ENCODE measurements at regions of chr9 and their contacts with region 1.

Region 1: DNA sequence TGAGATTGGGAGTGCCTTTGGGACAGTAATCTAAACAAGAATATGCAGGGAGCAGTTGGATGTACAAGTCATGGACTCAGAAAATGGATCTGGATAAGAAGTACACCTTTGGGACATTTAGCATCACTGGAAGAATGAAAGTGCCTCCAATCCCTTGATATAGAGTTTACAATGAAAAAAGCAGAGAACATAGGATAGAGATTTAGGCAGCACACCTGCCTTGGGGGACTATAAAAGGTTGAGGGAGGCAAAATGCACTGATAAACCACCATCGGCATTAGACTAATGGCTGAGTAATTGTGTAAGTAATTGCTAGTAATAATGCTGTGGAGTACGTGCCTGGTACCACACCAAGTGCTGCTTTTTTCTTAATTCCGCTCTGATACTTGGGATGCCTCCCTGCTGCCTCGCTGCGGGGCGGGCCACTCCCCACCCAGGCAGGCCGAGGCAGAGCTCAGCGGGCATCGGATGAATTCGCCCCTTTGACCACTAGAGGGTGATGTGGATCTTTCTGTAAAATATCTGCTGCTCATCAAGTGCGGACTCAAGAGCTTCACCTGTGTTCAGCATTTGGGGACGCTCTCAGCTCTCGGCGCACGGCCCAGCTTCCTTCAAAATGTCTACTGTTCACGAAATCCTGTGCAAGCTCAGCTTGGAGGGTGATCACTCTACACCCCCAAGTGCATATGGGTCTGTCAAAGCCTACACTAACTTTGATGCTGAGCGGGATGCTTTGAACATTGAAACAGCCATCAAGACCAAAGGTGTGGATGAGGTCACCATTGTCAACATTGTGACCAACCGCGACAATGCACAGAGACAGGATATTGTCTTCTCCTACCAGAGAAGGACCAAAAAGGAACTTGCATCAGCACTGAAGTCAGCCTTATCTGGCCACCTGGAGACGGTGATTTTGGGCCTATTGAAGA is 99.9 kb downstream of the ANKRD18B start:
- DNase-seq: peak; percentile 78 to 86 (median 82)
- H3K4me3 ChIP-seq: no peak overlapping the region
- H3K27ac ChIP-seq: no peak overlapping the region
- H3K4me1 ChIP-seq: peaks cover 0 to 10% (median 7%) of the 10 kb centered on the region in 4 experiments
- H3K27me3 ChIP-seq: no peaks in the 10 kb centered on the region

Region 2: DNA sequence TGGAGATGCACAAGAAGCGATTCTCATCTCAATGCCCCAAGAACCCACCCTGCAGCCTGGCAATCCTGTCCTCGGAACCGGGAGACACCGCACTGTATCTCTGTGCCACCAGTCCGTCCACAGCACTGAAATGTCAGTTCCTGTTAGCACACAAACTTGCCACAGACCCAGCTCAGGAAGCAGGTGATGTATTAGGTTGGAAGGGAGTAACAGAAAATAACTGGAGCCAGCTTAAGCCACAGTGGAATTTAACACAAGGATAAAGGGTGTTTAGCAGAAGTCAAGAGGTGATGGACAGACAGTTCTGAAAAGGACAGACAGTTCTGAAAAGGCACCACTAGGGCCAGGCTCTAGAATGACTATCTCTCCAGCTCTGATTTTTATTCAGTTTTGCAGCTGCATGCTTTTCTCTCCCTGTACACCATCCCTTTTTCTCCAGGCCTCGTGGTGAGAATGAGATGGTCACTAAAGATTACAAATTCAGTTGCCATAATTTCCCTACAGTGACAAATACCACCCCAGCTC is 14.5 kb after region 1 on chr9:
- CTCF ChIA-PET with region 1: interaction called, 18 read pairs
- POLR2A ChIA-PET with region 1: no interaction called
- DNase-seq: peak; percentile 18 to 78 (median 63)
- H3K4me3 ChIP-seq: peak overlapping the region in 6 of 7 experiments; percentile 9 to 77 (median 58)
- H3K27ac ChIP-seq: no peak overlapping the region
- H3K4me1 ChIP-seq: peaks cover 4 to 17% (median 14%) of the 10 kb centered on the region in 4 experiments
- H3K27me3 ChIP-seq: no peaks in the 10 kb centered on the region

Region 3: DNA sequence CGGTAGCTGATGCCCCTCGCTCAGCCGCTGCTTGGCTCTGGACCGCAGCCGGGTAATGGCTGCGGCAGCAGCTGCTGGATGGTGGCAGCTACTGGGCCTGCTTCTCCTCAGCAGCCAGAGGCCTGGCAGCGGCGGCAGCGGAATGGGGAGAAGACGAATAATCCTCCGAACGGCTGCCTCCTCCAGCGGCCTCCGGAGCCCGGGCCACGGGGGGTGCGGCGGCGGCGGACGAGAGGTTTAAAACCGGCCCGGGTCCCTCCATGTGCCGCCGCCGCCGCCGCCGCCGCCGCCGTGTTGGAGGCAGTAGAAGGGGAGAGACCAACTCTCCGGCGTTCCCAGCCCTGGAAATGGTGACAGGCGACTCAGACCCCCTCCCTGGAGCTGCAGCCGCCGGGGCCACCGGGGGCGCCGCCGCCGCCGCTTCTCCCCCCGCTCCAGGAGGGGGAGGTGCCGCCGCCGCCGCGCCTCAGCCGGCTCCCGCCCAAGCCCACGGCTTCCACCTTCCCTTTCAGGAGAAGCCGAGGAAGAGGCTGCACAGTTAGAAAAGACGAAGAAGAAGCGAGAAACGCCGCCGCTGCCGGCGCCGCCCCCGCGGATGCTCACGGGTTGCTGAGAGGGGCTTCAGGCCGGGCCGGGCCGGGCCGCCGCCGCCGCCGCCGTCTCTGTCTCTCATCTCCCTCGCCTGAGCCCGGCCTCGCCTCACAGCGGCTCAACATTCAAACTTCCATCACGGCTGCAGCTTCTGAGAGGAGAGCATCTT is 53.0 kb after region 1 on chr9:
- CTCF ChIA-PET with region 1: interaction called, 11 read pairs
- POLR2A ChIA-PET with region 1: no interaction called
- DNase-seq: peak; percentile 42 to 79 (median 57)
- H3K4me3 ChIP-seq: peak overlapping the region; percentile 65 to 83 (median 72)
- H3K27ac ChIP-seq: peak overlapping the region; percentile 25 to 70
- H3K4me1 ChIP-seq: peaks cover 0 to 14% (median 7%) of the 10 kb centered on the region in 4 experiments
- H3K27me3 ChIP-seq: no peaks in the 10 kb centered on the region

Region 4: DNA sequence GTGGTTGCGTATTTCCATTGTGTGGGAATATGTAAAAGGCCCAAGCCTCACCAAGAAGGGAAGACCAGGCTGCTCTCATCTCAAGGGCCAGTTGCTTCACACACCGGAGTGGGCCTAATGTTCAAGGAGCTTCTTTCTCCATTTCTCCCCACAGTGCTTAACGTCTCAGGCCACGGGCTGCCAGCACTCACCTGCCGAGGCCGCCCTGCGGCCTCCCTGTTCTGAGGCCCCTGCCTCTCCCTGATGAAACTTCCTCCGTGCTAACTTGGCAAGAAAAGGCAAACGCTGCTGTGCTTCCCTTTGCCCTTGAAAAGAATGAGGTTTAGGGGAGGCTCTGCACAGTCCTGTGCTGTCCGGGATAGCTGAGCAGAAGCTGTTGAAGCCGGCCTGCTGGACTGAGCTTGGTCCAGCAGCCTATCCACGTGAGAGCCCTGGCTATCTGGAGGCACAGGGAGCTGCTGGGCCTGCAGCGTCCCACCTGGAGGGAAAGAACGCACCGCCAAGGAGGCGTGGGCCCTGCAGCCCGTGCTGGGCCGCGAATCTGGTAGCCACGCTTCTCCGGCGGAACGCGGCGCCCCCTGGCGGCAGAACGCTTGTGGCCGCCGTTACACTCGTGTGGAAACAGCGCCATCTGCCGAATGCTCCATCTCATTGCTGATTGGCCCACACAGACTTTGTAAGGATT is 97.9 kb after region 1 on chr9:
- CTCF ChIA-PET with region 1: interaction called, 350 read pairs
- POLR2A ChIA-PET with region 1: interaction called, 5 read pairs
- DNase-seq: peak; percentile 80 to 92 (median 88)
- H3K4me3 ChIP-seq: no peak overlapping the region
- H3K27ac ChIP-seq: no peak overlapping the region
- H3K4me1 ChIP-seq: peaks cover 0 to 15% (median 11%) of the 10 kb centered on the region in 4 experiments
- H3K27me3 ChIP-seq: no peaks in the 10 kb centered on the region

Region 5: GRCh38 chr9:33778700-33779351 is 154.9 kb after region 1 on chr9:
- CTCF ChIA-PET with region 1: interaction called, 18 read pairs
- POLR2A ChIA-PET with region 1: no interaction called
- DNase-seq: peak; percentile 56 to 73 (median 69)
- H3K4me3 ChIP-seq: no peak overlapping the region
- H3K27ac ChIP-seq: no peak overlapping the region
- H3K4me1 ChIP-seq: no peaks in the 10 kb centered on the region
- H3K27me3 ChIP-seq: no peaks in the 10 kb centered on the region